ENCODE measurements at regions of chr19 and their contacts with region 1.

Region 1: DNA sequence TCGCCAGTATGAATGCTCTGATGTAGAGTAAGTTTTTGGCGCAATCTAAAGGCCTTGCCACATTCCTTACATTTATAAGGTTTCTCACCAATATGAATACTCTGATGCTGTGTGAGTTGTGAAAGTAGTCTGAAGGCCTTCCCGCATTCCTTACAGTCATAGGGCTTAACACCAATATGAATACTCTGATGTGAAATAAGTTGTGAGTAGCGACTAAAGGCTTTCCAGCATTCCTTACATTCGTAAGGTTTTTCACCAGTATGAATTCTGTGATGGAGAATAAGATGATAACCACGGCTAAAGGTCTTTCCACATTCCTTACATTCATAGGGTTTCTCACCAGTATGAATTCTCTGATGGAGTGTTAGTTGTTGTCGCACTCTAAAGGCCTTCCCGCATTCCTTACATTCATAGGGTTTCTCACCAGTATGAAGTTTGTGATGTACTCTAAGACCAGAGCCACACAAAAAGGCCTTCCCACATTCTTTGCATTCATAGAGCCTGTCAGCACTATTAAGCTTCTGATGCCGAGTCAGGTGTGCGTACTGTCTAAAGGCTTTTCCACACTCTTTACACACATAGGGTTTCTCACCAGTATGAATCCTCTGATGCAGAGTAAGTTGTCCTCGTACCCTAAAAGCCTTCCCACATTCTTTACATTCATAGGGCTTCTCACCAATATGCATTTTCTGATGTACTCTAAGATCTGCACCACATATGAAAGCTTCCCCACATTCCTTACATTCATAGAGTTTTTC is 14.1 kb upstream of the ZFP14 start:
- H3K4me3 ChIP-seq: no peak overlapping the region
- H3K27ac ChIP-seq: no peak overlapping the region
- H3K4me1 ChIP-seq: no peaks in the 10 kb centered on the region
- CTCF ChIP-seq: no peak

Region 2: GRCh38 chr19:36371886-36372285 is 21.2 kb before region 1 on chr19:
- CTCF ChIA-PET with region 1: interaction called, 10 read pairs
- POLR2A ChIA-PET with region 1: no interaction called
- H3K4me3 ChIP-seq: no peak overlapping the region
- H3K27ac ChIP-seq: no peak overlapping the region
- H3K4me1 ChIP-seq: no peaks in the 10 kb centered on the region
- CTCF ChIP-seq: no peak

Measured in HEK293 (cell line).